ENCODE measurements at regions of chrX and their contacts with region 1.

Region 1: GRCh38 chrX:78011846-78012245 is 42.4 kb upstream of the PGAM4 start:
- DNase-seq: no peak
- ATAC-seq: no peak
- H3K4me3 ChIP-seq: no peak overlapping the region
- H3K27ac ChIP-seq: no peak overlapping the region
- H3K4me1 ChIP-seq: no peaks in the 10 kb centered on the region
- H3K27me3 ChIP-seq: no peaks in the 10 kb centered on the region
- CTCF ChIP-seq: no peak

Region 2: DNA sequence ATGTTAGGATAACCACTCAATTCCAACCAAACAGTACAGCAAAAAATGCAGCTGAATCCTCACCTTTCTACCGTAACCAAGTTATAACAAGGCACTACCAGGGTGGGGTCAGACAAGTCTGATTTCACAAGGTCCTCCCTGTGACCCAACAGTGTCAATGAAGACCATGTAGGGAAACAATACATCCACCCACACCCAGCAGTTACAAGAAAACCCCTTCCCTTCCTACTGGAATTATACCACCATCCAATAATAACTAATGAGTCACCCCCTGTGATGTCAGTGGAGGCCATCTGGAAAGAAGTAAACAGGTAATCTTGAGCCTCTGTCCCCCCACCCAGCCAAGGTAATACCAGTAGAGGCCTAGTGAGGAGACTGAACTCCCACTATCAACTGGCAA is 447.0 kb before region 1 on chrX:
- intact Hi-C with region 1: no loop called
- DNase-seq: no peak
- ATAC-seq: peak in 1 of 8 donors; percentile 58
- H3K4me3 ChIP-seq: no peak overlapping the region
- H3K27ac ChIP-seq: no peak overlapping the region
- H3K4me1 ChIP-seq: no peaks in the 10 kb centered on the region
- H3K27me3 ChIP-seq: no peaks in the 10 kb centered on the region
- CTCF ChIP-seq: no peak

Region 3: DNA sequence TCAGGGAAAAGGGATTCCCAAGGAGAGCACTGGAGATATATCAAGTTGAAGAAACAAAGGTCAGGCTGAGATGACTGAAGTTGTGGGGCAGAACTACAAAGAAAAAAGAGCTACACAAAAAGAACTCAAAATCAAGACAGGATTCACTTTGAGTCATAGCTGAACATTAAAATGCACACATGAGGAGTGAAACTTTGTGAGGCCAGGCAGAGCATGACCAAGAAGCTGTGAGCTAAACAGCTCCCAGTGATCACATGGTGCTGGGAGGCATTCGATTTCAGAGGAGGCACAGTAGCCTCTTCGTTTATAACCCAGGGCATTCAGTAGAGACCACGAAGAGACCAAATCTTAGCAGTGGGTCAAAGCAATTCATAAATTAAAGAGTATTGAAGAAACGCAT is 371.1 kb before region 1 on chrX:
- intact Hi-C with region 1: loop called in 1 of 10 experiments (anchors 5 kb)
- DNase-seq: no peak
- ATAC-seq: no peak
- H3K4me3 ChIP-seq: no peak overlapping the region
- H3K27ac ChIP-seq: no peak overlapping the region
- H3K4me1 ChIP-seq: peaks cover 0 to 5% (median 0%) of the 10 kb centered on the region in 9 donors
- H3K27me3 ChIP-seq: no peaks in the 10 kb centered on the region
- CTCF ChIP-seq: no peak

Region 4: GRCh38 chrX:78066110-78066509 is 54.3 kb after region 1 on chrX:
- intact Hi-C with region 1: no loop called
- DNase-seq: no peak
- ATAC-seq: no peak
- H3K4me3 ChIP-seq: no peak overlapping the region
- H3K27ac ChIP-seq: no peak overlapping the region
- H3K4me1 ChIP-seq: no peaks in the 10 kb centered on the region
- H3K27me3 ChIP-seq: no peaks in the 10 kb centered on the region
- CTCF ChIP-seq: no peak

Measured in heart right ventricle (tissue), 16 donors.